Activated T-helper 2 cell treated with anti-CD3 and anti-CD28 coated beads, Interferon-gamma antibody, Interleukin-2, Interleukin-4, amounts not matched to agents 10 μg/mL and 5 μg/mL and 100 μg/mL, durations not matched to agents 14 hours and 24 hours and 36 hours (primary cell): ENCODE measurements at regions of chr6 and their contacts with region 1.

Region 1: GRCh38 chr6:8102122-8102958 is at the start of gene EEF1E1:
- DNase-seq: peak; percentile 88
- H3K4me3 Mint-ChIP-seq: peak within 1 kb of the TSS; percentile 100
- H3K27ac Mint-ChIP-seq: peak within 1 kb of the TSS; percentile 100
- H3K4me1 Mint-ChIP-seq: peaks cover 25% of the 10 kb centered on the region
- H3K27me3 Mint-ChIP-seq: peaks cover 18% of the 10 kb centered on the region
- total RNA-seq, gene EEF1E1: 83.1 and 87.3 TPM in 2 replicates

Region 2: GRCh38 chr6:7910654-7911344 is 191.5 kb before region 1 on chr6 and contains the start of gene TXNDC5:
- intact Hi-C with region 1: loop called (anchors 1 kb)
- DNase-seq: peak; percentile 61
- H3K4me3 Mint-ChIP-seq: peak within 1 kb of the TSS; percentile 90
- H3K27ac Mint-ChIP-seq: peak within 1 kb of the TSS; percentile 75
- H3K4me1 Mint-ChIP-seq: peaks cover 12% of the 10 kb centered on the region
- H3K27me3 Mint-ChIP-seq: peaks cover 1% of the 10 kb centered on the region
- total RNA-seq, gene TXNDC5: 113 and 117 TPM in 2 replicates

Region 3: DNA sequence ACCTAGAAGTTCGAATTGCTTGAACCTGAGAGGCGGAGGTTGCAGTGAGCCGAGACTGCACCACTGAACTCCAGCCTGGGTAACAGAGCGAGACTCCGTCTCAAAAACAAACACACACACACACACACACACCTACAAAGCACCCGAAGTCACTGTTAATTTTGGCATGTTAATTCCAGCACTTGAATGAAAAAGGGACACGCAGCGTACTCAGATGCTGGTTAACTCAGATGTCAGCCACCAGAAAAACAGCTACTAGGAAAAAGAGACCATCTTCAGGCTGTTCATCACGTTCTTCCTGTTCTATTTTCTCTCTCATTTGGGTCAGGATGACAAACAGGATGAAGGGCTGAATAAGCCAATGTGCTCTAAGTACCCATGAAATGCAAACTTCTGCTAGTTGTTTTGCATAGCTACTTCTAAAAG is 85.1 kb before region 1 on chr6:
- intact Hi-C with region 1: loop called (anchors 5 kb)
- DNase-seq: no peak
- H3K4me3 Mint-ChIP-seq: peak overlapping the region; percentile 80
- H3K27ac Mint-ChIP-seq: peak overlapping the region; percentile 96
- H3K4me1 Mint-ChIP-seq: peaks cover 20% of the 10 kb centered on the region
- H3K27me3 Mint-ChIP-seq: no peaks in the 10 kb centered on the region

Region 4: DNA sequence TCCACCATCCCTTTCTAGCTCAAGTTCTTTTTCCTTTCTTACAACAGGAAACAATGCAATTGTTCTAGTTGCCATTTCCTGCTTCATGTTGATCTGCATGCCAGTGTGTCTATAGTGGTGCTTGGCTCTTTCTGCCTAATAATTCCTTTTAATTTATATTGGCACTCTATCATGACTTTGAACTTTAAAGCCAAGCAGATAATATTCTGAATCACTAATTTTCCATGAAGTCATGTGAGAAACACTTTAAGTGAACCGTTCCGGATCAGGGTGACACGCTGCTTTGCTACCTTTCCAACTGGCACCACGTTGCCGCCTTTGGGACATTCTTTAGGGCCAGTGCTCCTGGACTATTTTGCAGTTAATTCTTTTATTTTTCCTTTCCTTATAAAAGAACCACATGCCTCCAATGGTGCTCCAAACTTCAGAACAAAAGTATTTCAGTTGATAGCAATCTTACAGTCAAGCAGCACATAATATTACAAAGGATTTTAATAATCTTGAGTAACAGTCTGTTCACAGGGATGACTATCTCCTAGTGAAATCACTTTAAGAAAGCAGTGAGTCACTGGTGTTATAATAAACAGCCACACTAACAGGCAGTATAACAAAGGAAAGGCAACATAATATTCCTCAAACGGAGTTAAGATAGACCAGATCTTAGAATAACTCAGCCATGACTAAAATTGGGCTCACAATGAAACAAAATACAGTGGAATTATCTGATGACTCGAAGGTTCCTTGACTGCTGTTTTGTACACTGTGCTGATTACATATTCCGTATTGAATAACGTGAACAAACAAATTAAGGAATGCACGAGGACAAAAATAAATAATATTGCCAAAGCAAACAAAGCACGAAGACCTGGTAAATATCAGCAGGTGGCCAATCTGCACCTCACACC is 19.1 kb before region 1 on chr6:
- intact Hi-C with region 1: loop called (anchors 2 kb)
- DNase-seq: no peak
- H3K4me3 Mint-ChIP-seq: no peak overlapping the region
- H3K27ac Mint-ChIP-seq: peak overlapping the region; percentile 78
- H3K4me1 Mint-ChIP-seq: peaks cover 31% of the 10 kb centered on the region
- H3K27me3 Mint-ChIP-seq: no peaks in the 10 kb centered on the region

Region 5: GRCh38 chr6:8329562-8329961 is 227.2 kb after region 1 on chr6:
- intact Hi-C with region 1: no loop called
- DNase-seq: no peak
- H3K4me3 Mint-ChIP-seq: no peak overlapping the region
- H3K27ac Mint-ChIP-seq: no peak overlapping the region
- H3K4me1 Mint-ChIP-seq: no peaks in the 10 kb centered on the region
- H3K27me3 Mint-ChIP-seq: no peaks in the 10 kb centered on the region